T-cell (primary cell): ENCODE measurements at regions of chr12 and their contacts with region 1.

Region 1: GRCh38 chr12:49225556-49226181 is 36.8 kb upstream of the TUBA1A start:
- DNase-seq: no peak
- ATAC-seq: no peak
- H3K4me3 ChIP-seq: no peak overlapping the region
- H3K4me3 Mint-ChIP-seq: no peak overlapping the region
- H3K27ac ChIP-seq: no peak overlapping the region
- H3K27ac Mint-ChIP-seq: no peak overlapping the region
- H3K4me1 ChIP-seq: no peaks in the 10 kb centered on the region
- H3K4me1 Mint-ChIP-seq: no peaks in the 10 kb centered on the region
- H3K27me3 ChIP-seq: no peaks in the 10 kb centered on the region
- H3K27me3 Mint-ChIP-seq: no peaks in the 10 kb centered on the region

Region 2: GRCh38 chr12:49244176-49244575 is 18.5 kb after region 1 on chr12:
- CTCF ChIA-PET with region 1: interaction called in 1 of 2 experiments, 5 read pairs
- POLR2A ChIA-PET with region 1: interaction called, 3 to 12 read pairs
- DNase-seq: no peak
- ATAC-seq: no peak
- H3K4me3 ChIP-seq: no peak overlapping the region
- H3K4me3 Mint-ChIP-seq: no peak overlapping the region
- H3K27ac ChIP-seq: no peak overlapping the region
- H3K27ac Mint-ChIP-seq: no peak overlapping the region
- H3K4me1 ChIP-seq: no peaks in the 10 kb centered on the region
- H3K4me1 Mint-ChIP-seq: no peaks in the 10 kb centered on the region
- H3K27me3 ChIP-seq: peaks cover 0 to 7% of the 10 kb centered on the region in 2 experiments
- H3K27me3 Mint-ChIP-seq: peaks cover 0 to 2% of the 10 kb centered on the region in 2 donors

Region 3: DNA sequence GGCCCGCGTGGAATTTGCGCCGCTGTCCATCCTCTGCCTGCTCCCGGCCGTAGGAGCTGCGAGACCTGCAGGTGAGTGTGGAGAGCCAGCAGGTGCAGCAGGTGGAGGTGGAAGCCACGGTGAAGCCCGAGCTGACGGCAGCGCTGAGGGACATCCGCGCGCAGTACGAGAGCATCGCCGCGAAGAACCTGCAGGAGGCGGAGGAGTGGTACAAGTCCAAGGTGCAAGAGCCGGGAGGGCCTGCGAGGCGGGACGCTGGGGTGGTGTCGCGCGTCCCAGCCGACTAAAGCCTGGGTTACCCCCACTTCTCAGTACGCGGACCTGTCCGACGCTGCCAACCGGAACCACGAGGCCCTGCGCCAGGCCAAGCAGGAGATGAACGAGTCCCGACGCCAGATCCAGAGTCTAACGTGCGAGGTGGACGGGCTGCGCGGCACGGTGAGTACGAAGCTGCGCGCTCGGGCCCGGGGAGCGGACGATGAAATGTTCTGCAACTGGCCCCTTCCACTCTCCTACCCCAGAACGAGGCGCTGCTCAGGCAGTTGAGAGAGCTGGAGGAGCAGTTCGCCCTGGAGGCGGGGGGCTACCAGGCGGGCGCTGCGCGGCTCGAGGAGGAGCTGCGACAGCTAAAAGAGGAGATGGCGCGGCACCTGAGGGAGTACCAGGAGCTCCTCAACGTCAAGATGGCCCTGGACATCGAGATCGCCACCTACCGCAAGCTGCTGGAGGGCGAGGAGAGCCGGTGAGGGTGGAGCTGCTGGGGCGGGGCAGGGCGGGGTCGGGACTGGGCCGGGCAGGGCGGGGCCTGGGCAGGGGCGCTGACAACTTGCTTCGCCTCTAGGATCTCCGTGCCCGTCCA is 71.4 kb after region 1 on chr12:
- CTCF ChIA-PET with region 1: no interaction called
- POLR2A ChIA-PET with region 1: no interaction called
- DNase-seq: peak in 28 of 35 experiments; percentile 3 to 52 (median 26)
- ATAC-seq: peak; percentile 57 to 75 (median 62)
- H3K4me3 ChIP-seq: peak overlapping the region; percentile 30 to 58
- H3K4me3 Mint-ChIP-seq: peak overlapping the region; percentile 54 to 70 (median 65)
- H3K27ac ChIP-seq: no peak overlapping the region
- H3K27ac Mint-ChIP-seq: no peak overlapping the region
- H3K4me1 ChIP-seq: peaks cover 0 to 30% of the 10 kb centered on the region in 2 experiments
- H3K4me1 Mint-ChIP-seq: peaks cover 9 to 27% (median 17%) of the 10 kb centered on the region in 3 donors
- H3K27me3 ChIP-seq: peaks cover 12 to 74% of the 10 kb centered on the region in 2 experiments
- H3K27me3 Mint-ChIP-seq: peaks cover 41 to 48% of the 10 kb centered on the region in 2 donors

Region 4: DNA sequence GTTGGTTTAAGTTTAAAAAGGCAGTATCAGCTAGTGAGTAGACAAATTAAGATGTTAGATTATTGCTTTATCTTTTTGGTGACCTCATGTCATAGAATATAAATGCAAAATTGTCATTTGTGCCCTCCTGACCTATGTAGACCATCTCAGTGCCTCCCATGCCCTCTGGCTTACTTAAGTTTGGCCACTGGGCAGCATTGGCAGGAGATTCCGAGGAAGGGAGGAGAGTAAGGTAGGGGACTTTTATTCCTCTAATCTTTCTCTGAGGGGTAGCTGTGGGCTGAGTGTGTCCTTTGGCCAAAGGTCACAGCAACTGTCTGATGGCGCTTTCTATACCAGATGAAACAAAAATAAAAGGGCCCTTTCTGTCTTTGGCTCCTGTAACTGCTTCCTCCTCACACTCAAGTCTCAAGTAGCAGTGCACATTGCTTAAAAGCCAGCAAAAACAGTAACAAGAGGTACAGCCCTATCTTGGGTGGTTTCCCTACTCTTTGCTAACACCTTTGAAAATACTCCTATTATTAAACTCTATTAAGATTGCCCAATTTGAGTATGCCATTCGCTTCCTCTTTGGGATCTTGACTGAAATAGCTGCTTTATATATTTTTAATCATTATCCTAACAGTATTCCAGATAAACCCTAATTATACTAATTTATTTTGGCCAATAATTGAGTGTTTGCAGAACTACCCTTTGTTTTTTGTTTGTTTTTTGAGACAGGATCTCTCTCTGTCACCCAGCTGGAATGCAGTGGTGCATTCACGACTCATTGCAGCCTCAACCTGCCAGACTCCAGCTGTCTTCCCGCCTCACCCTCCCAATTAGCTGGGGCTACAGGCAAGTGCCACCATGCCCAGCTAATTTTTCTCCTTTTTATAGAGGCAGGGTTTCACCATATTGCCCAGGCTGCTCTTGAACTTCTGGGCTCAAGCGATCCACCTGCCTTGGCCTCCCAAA is 256.7 kb after region 1 on chr12:
- CTCF ChIA-PET with region 1: no interaction called
- POLR2A ChIA-PET with region 1: no interaction called
- DNase-seq: no peak
- ATAC-seq: no peak
- H3K4me3 ChIP-seq: no peak overlapping the region
- H3K4me3 Mint-ChIP-seq: no peak overlapping the region
- H3K27ac ChIP-seq: no peak overlapping the region
- H3K27ac Mint-ChIP-seq: no peak overlapping the region
- H3K4me1 ChIP-seq: peaks cover 0 to 3% of the 10 kb centered on the region in 2 experiments
- H3K4me1 Mint-ChIP-seq: peaks cover 10 to 22% (median 13%) of the 10 kb centered on the region in 3 donors
- H3K27me3 ChIP-seq: no peaks in the 10 kb centered on the region
- H3K27me3 Mint-ChIP-seq: no peaks in the 10 kb centered on the region

Region 5: GRCh38 chr12:49588721-49589516 is 363.2 kb after region 1 on chr12:
- CTCF ChIA-PET with region 1: no interaction called
- POLR2A ChIA-PET with region 1: no interaction called
- DNase-seq: no peak
- ATAC-seq: no peak
- H3K4me3 ChIP-seq: no peak overlapping the region
- H3K4me3 Mint-ChIP-seq: no peak overlapping the region
- H3K27ac ChIP-seq: no peak overlapping the region
- H3K27ac Mint-ChIP-seq: no peak overlapping the region
- H3K4me1 ChIP-seq: no peaks in the 10 kb centered on the region
- H3K4me1 Mint-ChIP-seq: no peaks in the 10 kb centered on the region
- H3K27me3 ChIP-seq: no peaks in the 10 kb centered on the region
- H3K27me3 Mint-ChIP-seq: no peaks in the 10 kb centered on the region

Region 6: GRCh38 chr12:50055831-50056638 is 830.4 kb after region 1 on chr12:
- CTCF ChIA-PET with region 1: no interaction called
- POLR2A ChIA-PET with region 1: interaction called in 1 of 2 experiments, 10 read pairs
- DNase-seq: peak in 32 of 35 experiments; percentile 12 to 73 (median 45)
- ATAC-seq: peak; percentile 39 to 63 (median 49)
- H3K4me3 ChIP-seq: peak overlapping the region in 1 of 2 donors; percentile 46
- H3K4me3 Mint-ChIP-seq: peak overlapping the region; percentile 86 to 94 (median 87)
- H3K27ac ChIP-seq: no peak overlapping the region
- H3K27ac Mint-ChIP-seq: peak overlapping the region in 1 of 2 donors; percentile 63
- H3K4me1 ChIP-seq: peaks cover 27 to 48% of the 10 kb centered on the region in 2 experiments
- H3K4me1 Mint-ChIP-seq: peaks cover 35 to 48% (median 42%) of the 10 kb centered on the region in 3 donors
- H3K27me3 ChIP-seq: peaks cover 3 to 78% of the 10 kb centered on the region in 2 experiments
- H3K27me3 Mint-ChIP-seq: peaks cover 30 to 65% of the 10 kb centered on the region in 2 donors